Cardiac septum (tissue), 1 donor: ENCODE measurements at regions of chr20 and their contacts with region 1.

Region 1: GRCh38 chr20:2752567-2753460 is 47.6 kb downstream of the CPXM1 start:
- DNase-seq: no peak

Region 2: DNA sequence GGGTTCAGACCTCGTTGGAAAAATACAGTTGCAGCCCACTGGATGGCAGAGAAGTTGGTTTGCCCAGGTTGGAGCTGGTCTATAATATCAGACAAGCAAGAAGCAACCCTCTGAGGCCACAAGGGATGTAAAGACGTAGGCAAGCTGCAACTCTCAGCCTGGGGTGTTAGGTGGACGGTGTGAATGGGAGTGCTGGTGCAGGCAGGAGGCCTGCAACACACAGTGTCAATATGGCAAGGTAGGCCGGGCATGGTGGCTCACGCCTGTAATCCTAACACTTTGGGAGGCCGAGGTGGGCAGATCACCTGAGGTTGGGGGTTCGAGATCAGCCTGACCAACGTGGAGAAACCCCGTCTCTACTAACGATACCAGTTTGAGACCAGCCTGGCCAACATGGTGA is 98.3 kb after region 1 on chr20:
- intact Hi-C with region 1: loop called (anchors 5 kb)
- DNase-seq: no peak

Region 3: GRCh38 chr20:3000852-3001523 is 248.2 kb after region 1 on chr20:
- intact Hi-C with region 1: loop called (anchors 5 kb)
- DNase-seq: no peak